ENCODE measurements at regions of chr21 and their contacts with region 1.

Region 1: DNA sequence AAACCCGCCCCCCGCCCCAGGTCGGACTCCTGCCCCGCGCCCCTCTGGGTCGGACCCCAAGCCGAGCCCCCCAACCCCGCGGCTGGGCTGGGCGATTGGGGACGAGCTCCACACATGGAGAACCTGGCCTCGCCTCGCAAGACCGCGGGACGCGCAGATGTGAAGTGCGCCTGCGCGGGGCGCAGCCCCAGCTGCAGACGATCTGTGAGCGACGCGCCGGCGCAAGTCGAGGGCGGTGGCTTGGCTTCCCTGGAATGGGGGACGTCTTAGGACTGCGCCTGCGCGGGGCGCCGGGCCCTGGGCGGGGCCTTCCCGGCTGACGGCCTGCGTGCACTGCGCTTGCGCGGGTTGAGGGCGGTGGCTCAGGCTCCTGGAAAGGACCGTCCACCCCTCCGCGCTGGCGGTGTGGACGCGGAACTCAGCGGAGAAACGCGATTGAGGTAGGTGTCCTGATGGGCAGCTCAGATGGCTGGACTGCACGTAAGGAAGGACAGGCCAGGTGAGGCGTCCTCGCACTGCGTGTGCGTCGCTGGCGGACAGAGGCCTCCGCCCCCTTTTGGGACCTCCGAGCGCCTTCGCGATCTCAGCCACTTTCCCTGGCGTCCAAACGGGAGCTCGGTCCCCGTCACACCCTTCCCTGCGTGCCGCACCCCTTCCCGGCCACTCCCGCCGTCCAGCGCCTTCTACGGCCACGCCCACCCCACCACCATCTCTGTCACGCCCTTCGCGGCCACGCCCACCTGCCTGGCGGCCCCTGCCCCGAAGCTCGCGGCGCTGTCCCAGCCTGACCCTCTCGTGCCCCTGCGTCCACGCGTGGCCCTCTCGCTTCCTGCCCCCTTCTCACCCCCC is at the start of gene PRMT2:
- DNase-seq: peak; percentile 90 to 98 (median 95)
- H3K4me3 ChIP-seq: peak within 1 kb of the TSS; percentile 69 to 100 (median 96)
- H3K27ac ChIP-seq: peak within 1 kb of the TSS; percentile 93 to 100 (median 99)
- H3K27me3 ChIP-seq: no peaks in the 10 kb centered on the region
- CTCF ChIP-seq: peak in 35 of 56 donors; percentile 1 to 52 (median 32)
- total RNA-seq, gene PRMT2: 91.1 to 161 (median 119) TPM

Region 2: DNA sequence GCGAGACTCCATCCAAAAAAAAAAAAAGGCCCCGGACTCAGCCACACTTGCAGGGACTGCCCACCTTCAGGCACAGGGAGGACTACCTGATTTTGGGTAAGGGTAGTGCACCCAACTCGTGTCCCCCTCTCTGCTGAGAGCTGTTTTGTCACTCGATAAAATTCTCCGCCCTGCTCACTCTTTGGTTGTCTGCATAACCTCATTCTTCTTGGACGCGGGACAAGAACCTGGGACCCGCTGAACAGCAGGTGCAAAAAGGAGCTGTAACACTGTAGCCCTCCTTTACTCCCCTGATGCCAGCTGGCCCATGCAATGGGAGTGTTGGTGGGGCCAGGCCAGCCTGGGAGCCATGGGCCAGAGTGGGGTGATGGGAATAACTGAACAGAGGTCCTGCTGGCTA is 41.3 kb before region 1 on chr21:
- intact Hi-C with region 1: no loop called
- DNase-seq: no peak
- H3K4me3 ChIP-seq: no peak overlapping the region
- H3K27ac ChIP-seq: peak overlapping the region in 16 of 59 donors; percentile 9 to 94 (median 36)
- H3K27me3 ChIP-seq: no peaks in the 10 kb centered on the region
- CTCF ChIP-seq: no peak

Region 3: GRCh38 chr21:46605767-46606426 is 29.7 kb before region 1 on chr21:
- intact Hi-C with region 1: loop called in 1 of 2 experiments (anchors 1 kb)
- DNase-seq: peak in 2 of 10 donors; percentile 25 to 51
- H3K4me3 ChIP-seq: peak overlapping the region in 7 of 59 donors; percentile 58 to 83 (median 70)
- H3K27ac ChIP-seq: peak overlapping the region; percentile 76 to 98 (median 94)
- H3K27me3 ChIP-seq: no peaks in the 10 kb centered on the region
- CTCF ChIP-seq: no peak

Measured in dorsolateral prefrontal cortex (tissue), 120 donors.